PC-9 (cell line): ENCODE measurements at regions of chr15 and their contacts with region 1.

Region 1: GRCh38 chr15:52568601-52569256 is at the start of gene ARPP19:
- DNase-seq: peak; percentile 77 to 88
- H3K4me3 ChIP-seq: peak within 1 kb of the TSS; percentile 94
- H3K27ac ChIP-seq: peak within 1 kb of the TSS; percentile 84
- H3K4me1 ChIP-seq: peaks cover 15% of the 10 kb centered on the region
- H3K27me3 ChIP-seq: no peaks in the 10 kb centered on the region
- CTCF ChIP-seq: no peak
- total RNA-seq, gene ARPP19: 108 and 119 TPM in 2 replicates

Region 2: GRCh38 chr15:52735231-52736089 is 166.7 kb after region 1 on chr15:
- CTCF ChIA-PET with region 1: no interaction called
- POLR2A ChIA-PET with region 1: no interaction called
- intact Hi-C with region 1: loop called (anchors 10 kb)
- DNase-seq: peak; percentile 68 to 69
- H3K4me3 ChIP-seq: no peak overlapping the region
- H3K27ac ChIP-seq: no peak overlapping the region
- H3K4me1 ChIP-seq: peaks cover 13% of the 10 kb centered on the region
- H3K27me3 ChIP-seq: no peaks in the 10 kb centered on the region
- CTCF ChIP-seq: peak; percentile 84